Caco-2 (cell line): ENCODE measurements at regions of chr9 and their contacts with region 1.

Region 1: DNA sequence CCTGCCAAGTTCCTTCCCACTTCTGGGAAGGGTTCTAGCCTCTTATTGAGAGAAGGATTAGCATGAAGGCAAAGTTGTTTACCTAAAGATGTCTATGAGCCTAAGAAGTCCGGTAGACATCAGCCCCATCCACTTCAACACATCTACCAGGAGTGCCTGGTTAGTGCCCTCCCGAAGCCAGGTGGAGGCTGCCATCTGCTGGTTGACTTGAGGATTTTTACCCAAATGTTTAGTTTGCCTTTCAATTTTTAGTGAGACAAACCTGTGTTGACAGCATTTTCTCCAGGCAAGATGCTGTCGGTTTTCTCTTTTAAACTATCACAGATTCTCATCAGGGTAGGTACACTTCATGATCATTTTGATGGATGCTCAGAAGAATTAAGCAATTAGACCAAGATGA is 83.6 kb upstream of the TNFSF8 start:
- DNase-seq: peak; percentile 77 to 78
- H3K4me3 ChIP-seq: no peak overlapping the region
- H3K4me3 Mint-ChIP-seq: no peak overlapping the region
- H3K27ac Mint-ChIP-seq: no peak overlapping the region
- H3K4me1 ChIP-seq: peaks cover 13% of the 10 kb centered on the region
- H3K4me1 Mint-ChIP-seq: peaks cover 29% of the 10 kb centered on the region
- H3K27me3 ChIP-seq: no peaks in the 10 kb centered on the region
- H3K27me3 Mint-ChIP-seq: no peaks in the 10 kb centered on the region
- CTCF ChIP-seq: peak; percentile 77 to 85

Region 2: DNA sequence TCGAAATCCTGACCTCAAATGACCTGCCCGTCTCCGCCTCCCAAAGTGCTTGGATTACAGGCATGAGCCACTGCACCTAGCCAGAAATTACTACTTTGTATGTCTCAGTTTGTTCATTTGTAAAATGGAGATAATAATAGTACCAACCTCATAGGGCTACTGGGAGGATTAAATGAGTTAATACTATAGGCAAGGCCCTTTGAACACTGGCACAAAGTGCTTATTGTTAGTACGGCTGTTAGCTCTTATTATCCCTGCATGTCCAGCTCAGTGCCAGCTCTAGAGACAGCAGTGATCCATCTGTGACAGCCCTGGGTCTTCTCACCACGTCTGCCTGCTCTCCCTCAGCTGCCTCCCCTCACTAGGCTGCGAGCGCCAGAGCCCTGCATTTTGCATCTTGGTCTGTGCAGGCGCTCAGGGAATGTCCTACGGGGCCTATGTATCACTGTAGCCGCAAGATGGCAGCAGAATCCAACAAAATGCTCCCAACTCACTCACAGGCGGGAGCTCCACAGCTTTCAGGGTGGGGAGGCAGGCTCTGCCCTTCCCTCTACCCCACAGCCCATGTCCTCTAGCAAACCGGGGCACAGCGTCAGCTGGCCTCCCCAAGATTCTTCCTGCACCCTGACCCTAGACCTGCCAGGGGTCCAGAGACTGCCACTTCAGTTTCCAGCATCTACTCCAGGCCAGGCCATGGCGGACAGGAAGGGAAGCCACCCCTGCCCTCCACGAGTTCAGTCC is 608.5 kb before region 1 on chr9:
- CTCF ChIA-PET with region 1: interaction called, 3 read pairs
- POLR2A ChIA-PET with region 1: no interaction called
- intact Hi-C with region 1: loop called (anchors 1 kb)
- DNase-seq: peak; percentile 81 to 82
- H3K4me3 ChIP-seq: no peak overlapping the region
- H3K4me3 Mint-ChIP-seq: no peak overlapping the region
- H3K27ac Mint-ChIP-seq: no peak overlapping the region
- H3K4me1 ChIP-seq: peaks cover 9% of the 10 kb centered on the region
- H3K4me1 Mint-ChIP-seq: no peaks in the 10 kb centered on the region
- H3K27me3 ChIP-seq: no peaks in the 10 kb centered on the region
- H3K27me3 Mint-ChIP-seq: no peaks in the 10 kb centered on the region
- CTCF ChIP-seq: peak; percentile 75 to 88

Region 3: DNA sequence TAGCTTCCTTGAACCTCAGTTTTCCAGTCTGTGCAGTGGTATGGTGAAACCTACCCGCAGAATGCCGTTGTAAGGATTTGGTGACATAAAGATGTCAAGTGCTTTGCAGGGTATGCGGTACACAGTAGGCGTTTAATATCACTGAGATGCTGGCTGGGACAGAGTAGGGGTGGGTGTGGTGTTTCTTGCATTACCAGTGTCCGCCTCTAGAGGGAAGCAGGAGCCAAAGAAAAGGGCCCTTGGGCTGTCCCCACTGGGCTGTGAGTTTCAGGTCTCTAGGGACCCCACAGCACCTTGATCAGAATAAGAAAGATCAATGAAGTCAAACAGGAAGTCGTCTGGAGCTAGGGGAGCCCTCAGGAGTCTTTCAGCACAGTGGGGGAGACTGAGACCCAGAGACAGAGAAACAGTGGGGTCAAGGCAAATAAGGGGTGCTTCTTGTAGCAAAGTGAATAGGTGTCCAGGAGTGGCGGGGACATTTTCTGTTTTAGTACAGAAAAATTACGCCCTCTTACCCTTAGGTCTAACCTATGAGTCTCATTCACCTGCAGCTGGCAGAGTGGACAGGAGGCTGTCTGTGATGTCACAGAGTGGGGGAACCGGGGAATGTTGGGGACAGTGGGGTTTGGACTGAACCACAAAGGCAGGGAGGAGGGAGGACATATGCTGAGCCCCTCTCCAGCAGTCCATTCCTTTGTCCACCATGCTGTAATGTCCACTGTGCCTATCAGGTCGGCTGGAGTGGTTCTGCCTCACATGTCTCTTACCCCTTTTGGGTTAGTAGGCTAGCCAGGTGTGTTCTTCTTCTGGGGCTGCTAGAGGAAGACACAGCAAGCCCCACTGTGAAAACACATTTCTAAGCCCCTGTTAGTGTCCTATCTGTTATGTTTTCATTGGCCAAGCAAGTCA is 351.7 kb before region 1 on chr9:
- CTCF ChIA-PET with region 1: no interaction called
- POLR2A ChIA-PET with region 1: no interaction called
- intact Hi-C with region 1: loop called (anchors 1 kb)
- DNase-seq: peak; percentile 60 to 71
- H3K4me3 ChIP-seq: no peak overlapping the region
- H3K4me3 Mint-ChIP-seq: no peak overlapping the region
- H3K27ac Mint-ChIP-seq: no peak overlapping the region
- H3K4me1 ChIP-seq: no peaks in the 10 kb centered on the region
- H3K4me1 Mint-ChIP-seq: no peaks in the 10 kb centered on the region
- H3K27me3 ChIP-seq: no peaks in the 10 kb centered on the region; the same call in 1 of the 2 replicates
- H3K27me3 Mint-ChIP-seq: peaks cover 11% of the 10 kb centered on the region
- CTCF ChIP-seq: peak; percentile 83

Region 4: DNA sequence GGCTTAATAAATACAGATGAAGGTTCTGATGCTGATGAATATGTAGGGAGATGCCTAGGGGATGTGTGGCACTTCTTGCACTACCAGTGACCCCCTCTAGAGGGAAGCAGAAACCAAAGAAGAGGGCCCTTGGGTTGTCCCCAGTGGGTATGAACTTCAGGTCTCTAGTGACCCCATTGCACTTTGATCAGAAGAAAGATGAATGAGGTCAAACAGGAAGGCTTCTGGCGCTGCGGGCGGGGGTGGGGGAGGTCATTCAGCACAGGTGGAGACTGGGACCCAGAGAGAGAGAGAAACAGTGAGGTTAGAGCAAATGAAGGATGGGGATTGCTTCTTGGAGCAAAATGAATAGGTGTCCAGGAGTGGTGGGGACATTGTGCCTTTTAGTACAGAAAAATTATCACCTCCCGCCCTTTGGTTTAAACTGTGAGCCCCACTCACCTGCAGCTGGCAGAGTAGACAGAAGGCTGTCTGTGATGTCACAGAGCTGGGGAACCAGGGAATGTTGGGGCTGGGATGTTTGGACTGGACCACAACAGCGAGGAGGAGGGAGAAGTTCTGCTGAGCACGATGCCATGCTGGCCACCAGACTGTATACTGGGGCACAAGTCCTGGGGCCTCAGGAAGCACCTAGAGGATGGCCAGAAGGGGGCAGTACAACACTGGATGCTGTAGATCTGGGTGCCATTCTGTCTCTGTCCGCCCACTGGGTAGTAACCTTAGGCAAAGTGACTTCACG is 332.2 kb before region 1 on chr9 and contains the start of gene TEX48:
- CTCF ChIA-PET with region 1: no interaction called
- POLR2A ChIA-PET with region 1: no interaction called
- intact Hi-C with region 1: loop called (anchors 1 kb)
- DNase-seq: peak; percentile 73 to 83
- H3K4me3 ChIP-seq: no peak within 1 kb of the TSS
- H3K4me3 Mint-ChIP-seq: no peak within 1 kb of the TSS
- H3K27ac Mint-ChIP-seq: no peak within 1 kb of the TSS
- H3K4me1 ChIP-seq: no peaks in the 10 kb centered on the region; the same call in 1 of the 2 replicates
- H3K4me1 Mint-ChIP-seq: peaks cover 16% of the 10 kb centered on the region
- H3K27me3 ChIP-seq: no peaks in the 10 kb centered on the region
- H3K27me3 Mint-ChIP-seq: no peaks in the 10 kb centered on the region
- CTCF ChIP-seq: peak; percentile 80 to 86
- total RNA-seq, gene TEX48: not detected in 2 replicates

Region 5: DNA sequence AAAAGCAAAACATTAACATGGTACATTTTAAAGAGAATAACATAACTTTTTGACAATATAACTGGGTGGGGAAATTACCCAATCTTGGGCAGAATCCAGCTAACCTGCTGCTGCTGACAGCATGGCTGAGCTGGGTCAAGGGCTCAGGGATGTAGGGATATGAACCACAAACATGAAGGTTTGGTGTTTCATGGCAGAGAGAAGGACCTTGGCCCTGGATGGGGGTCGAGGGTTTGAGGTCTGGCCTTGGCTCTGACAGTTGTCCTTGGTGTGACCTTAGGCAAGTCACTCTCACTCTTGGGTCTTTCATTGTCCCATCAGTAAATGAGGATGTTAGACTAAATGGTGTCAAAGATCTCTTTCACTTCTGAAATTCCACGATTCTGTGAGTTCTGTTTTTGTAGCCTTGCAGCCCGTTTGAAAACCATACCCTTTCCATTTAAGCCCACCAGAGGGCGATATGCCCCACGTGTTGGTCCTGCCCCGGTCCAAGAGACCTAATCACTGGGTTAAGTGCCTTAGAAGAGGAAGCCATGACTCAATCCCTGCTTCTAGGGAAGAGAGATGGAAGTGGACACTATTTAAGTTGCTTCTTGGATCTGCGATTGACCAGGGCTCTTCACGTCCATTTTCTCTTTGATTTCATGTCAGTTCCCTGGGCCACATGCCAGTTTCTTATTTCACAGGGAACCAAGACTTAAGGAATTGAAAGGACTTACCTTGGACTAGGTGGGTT is 275.2 kb before region 1 on chr9:
- CTCF ChIA-PET with region 1: interaction called, 3 read pairs
- POLR2A ChIA-PET with region 1: no interaction called
- intact Hi-C with region 1: loop called (anchors 1 kb)
- DNase-seq: peak; percentile 68 to 78
- H3K4me3 ChIP-seq: no peak overlapping the region
- H3K4me3 Mint-ChIP-seq: no peak overlapping the region
- H3K27ac Mint-ChIP-seq: no peak overlapping the region
- H3K4me1 ChIP-seq: no peaks in the 10 kb centered on the region
- H3K4me1 Mint-ChIP-seq: no peaks in the 10 kb centered on the region
- H3K27me3 ChIP-seq: no peaks in the 10 kb centered on the region
- H3K27me3 Mint-ChIP-seq: no peaks in the 10 kb centered on the region
- CTCF ChIP-seq: peak; percentile 75 to 83

Region 6: GRCh38 chr9:114805670-114806525 is 208.1 kb before region 1 on chr9 and contains the start of gene TNFSF15:
- CTCF ChIA-PET with region 1: no interaction called
- POLR2A ChIA-PET with region 1: no interaction called
- intact Hi-C with region 1: loop called (anchors 2 kb)
- DNase-seq: peak; percentile 63 to 80
- H3K4me3 ChIP-seq: no peak within 1 kb of the TSS
- H3K4me3 Mint-ChIP-seq: peak within 1 kb of the TSS; percentile 56
- H3K27ac Mint-ChIP-seq: peak within 1 kb of the TSS; percentile 25
- H3K4me1 ChIP-seq: peaks cover 40% of the 10 kb centered on the region
- H3K4me1 Mint-ChIP-seq: peaks cover 29% of the 10 kb centered on the region
- H3K27me3 ChIP-seq: no peaks in the 10 kb centered on the region
- H3K27me3 Mint-ChIP-seq: peaks cover 6% of the 10 kb centered on the region
- CTCF ChIP-seq: no peak
- total RNA-seq, gene TNFSF15: 0.66 and 1.00 TPM in 2 replicates